HCT116 (cell line): ENCODE measurements at regions of chr1 and their contacts with region 1.

Region 1: GRCh38 chr1:98794196-98794886 is 132.8 kb downstream of the SNX7 start:
- DNase-seq: peak; percentile 48
- ATAC-seq: peak; percentile 92
- H3K4me3 ChIP-seq: no peak overlapping the region
- H3K27ac ChIP-seq: no peak overlapping the region
- H3K4me1 ChIP-seq: no peaks in the 10 kb centered on the region
- H3K27me3 ChIP-seq: no peaks in the 10 kb centered on the region
- CTCF ChIP-seq: peak; percentile 46 to 80 (median 69); a peak in 5 of 6 replicates
- POLR2A ChIP-seq: no peak
- RAD21 ChIP-seq: peak; percentile 67

Region 2: DNA sequence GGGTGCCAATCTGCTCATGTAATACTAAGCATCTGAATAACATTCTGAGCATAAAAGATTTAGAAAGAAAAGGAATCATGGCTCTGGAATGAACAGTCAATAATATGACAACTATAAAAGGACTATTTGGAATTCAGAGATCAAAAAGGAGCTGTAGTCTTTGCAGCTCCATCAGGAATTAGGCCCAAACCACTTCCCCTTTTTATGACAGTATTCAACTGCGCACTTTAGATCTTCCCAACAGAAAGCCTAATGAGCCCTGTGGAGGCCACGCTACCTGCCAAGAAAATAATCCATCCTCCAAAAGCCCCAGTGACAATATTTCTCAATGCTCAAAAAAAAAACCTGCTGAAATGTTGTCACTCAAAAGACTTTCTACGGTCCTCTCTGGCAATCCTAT is 30.4 kb after region 1 on chr1:
- CTCF ChIA-PET with region 1: no interaction called
- POLR2A ChIA-PET with region 1: no interaction called
- RAD21 ChIA-PET with region 1: no interaction called
- intact Hi-C with region 1: no loop called
- DNase-seq: no peak
- ATAC-seq: no peak
- H3K4me3 ChIP-seq: no peak overlapping the region
- H3K27ac ChIP-seq: no peak overlapping the region
- H3K4me1 ChIP-seq: no peaks in the 10 kb centered on the region
- H3K27me3 ChIP-seq: no peaks in the 10 kb centered on the region
- CTCF ChIP-seq: no peak
- POLR2A ChIP-seq: no peak
- RAD21 ChIP-seq: no peak

Region 3: DNA sequence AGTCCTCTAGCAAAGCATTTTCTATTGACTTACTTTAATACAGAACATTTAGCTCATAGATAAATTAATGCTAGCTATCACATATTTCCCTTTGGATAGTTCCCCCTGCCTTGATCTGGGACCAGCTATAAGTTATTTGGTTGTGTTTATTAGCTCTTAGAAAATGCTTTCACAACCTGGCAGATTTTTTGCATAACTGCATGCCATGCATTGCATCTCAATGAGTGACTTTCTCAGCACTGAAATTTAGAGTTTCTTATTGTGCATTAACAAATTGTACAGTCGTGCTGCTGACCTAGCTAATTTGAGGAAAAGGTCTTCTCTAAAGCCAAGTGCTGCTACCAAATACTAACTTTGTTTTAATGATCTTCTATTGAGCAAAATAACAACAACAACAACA is 45.5 kb after region 1 on chr1:
- CTCF ChIA-PET with region 1: no interaction called
- POLR2A ChIA-PET with region 1: no interaction called
- RAD21 ChIA-PET with region 1: no interaction called
- intact Hi-C with region 1: no loop called
- DNase-seq: no peak
- ATAC-seq: no peak
- H3K4me3 ChIP-seq: no peak overlapping the region
- H3K27ac ChIP-seq: no peak overlapping the region
- H3K4me1 ChIP-seq: no peaks in the 10 kb centered on the region
- H3K27me3 ChIP-seq: no peaks in the 10 kb centered on the region
- CTCF ChIP-seq: no peak
- POLR2A ChIP-seq: no peak
- RAD21 ChIP-seq: no peak

Region 4: DNA sequence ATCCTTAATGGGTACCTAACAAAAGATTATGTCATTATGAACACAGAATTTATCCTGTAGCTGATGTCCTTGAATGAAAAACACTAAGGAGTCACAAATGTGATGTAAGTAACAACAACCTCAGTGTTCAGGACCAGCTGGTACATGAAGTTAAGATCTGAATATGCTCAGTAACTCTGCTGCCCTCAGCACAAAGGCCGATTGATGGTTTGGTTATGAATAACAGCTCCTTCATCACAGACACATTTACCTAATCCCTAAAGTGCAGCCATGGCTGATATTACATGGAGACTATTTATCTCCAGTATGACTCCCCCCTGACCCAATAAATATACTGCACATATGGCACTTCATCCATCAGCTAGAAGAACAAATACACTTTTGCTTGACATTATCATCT is 135.1 kb after region 1 on chr1:
- CTCF ChIA-PET with region 1: no interaction called
- POLR2A ChIA-PET with region 1: no interaction called
- RAD21 ChIA-PET with region 1: no interaction called
- intact Hi-C with region 1: no loop called
- DNase-seq: no peak
- ATAC-seq: no peak
- H3K4me3 ChIP-seq: no peak overlapping the region
- H3K27ac ChIP-seq: no peak overlapping the region
- H3K4me1 ChIP-seq: no peaks in the 10 kb centered on the region
- H3K27me3 ChIP-seq: no peaks in the 10 kb centered on the region
- CTCF ChIP-seq: no peak
- POLR2A ChIP-seq: no peak
- RAD21 ChIP-seq: no peak

Region 5: GRCh38 chr1:99170516-99170915 is 376.2 kb after region 1 on chr1:
- CTCF ChIA-PET with region 1: no interaction called
- POLR2A ChIA-PET with region 1: no interaction called
- RAD21 ChIA-PET with region 1: no interaction called
- intact Hi-C with region 1: loop called (anchors 10 kb)
- DNase-seq: no peak
- ATAC-seq: no peak
- H3K4me3 ChIP-seq: no peak overlapping the region
- H3K27ac ChIP-seq: no peak overlapping the region
- H3K4me1 ChIP-seq: peaks cover 0 to 13% of the 10 kb centered on the region in 2 experiments; a peak in 3 of 4 replicates
- H3K27me3 ChIP-seq: no peaks in the 10 kb centered on the region
- CTCF ChIP-seq: no peak
- POLR2A ChIP-seq: no peak
- RAD21 ChIP-seq: no peak